Panc1 (cell line): ENCODE measurements at regions of chr17 and their contacts with region 1.

Region 1: DNA sequence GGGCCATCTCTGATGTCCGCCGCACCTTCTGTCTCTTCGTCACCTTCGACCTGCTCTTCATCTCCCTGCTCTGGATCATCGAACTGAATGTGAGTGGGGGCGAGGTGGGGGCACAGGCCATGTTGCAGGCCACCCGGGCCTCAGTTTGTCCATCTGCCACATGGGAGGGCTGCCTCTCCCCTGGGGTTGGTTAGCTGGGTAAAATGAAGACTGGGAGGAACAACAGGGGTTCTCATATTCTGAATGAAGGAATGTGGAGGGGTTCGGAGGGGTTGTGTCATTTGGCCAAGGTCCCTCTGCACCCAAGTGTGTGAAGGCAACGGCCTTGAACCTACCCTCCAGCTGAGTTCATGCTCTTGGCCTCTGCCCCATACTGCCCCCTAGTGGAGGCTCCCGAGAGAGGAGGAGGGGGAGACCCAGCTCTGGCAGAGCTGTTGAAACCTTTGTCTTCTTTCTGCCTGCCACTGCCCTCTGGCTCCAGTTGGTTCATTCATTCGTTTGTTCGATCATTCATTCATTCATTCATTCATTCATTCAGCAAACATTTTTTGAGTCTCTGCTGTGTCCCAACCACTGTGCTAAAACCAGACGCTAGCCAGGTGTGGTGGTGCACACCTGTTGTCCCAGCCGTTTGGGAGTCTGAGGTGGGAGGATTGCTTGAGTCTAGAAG is 11.4 kb upstream of the TCAP start:
- DNase-seq: no peak
- ATAC-seq: peak; percentile 74
- H3K4me3 ChIP-seq: no peak overlapping the region
- H3K27ac ChIP-seq: no peak overlapping the region
- H3K4me1 ChIP-seq: peaks cover 11% of the 10 kb centered on the region; the same call in 1 of the 2 replicates
- H3K27me3 ChIP-seq: no peaks in the 10 kb centered on the region
- CTCF ChIP-seq: peak; percentile 86

Region 2: GRCh38 chr17:39485555-39485954 is 168.2 kb before region 1 on chr17:
- CTCF ChIA-PET with region 1: no interaction called
- POLR2A ChIA-PET with region 1: no interaction called
- in situ Hi-C with region 1: no loop called
- intact Hi-C with region 1: no loop called
- DNase-seq: peak; percentile 13
- ATAC-seq: 0 out of 2 replicates have a peak, but pooled peaks have one; percentile 60
- H3K4me3 ChIP-seq: no peak overlapping the region
- H3K27ac ChIP-seq: no peak overlapping the region
- H3K4me1 ChIP-seq: no peaks in the 10 kb centered on the region
- H3K27me3 ChIP-seq: no peaks in the 10 kb centered on the region
- CTCF ChIP-seq: no peak

Region 3: DNA sequence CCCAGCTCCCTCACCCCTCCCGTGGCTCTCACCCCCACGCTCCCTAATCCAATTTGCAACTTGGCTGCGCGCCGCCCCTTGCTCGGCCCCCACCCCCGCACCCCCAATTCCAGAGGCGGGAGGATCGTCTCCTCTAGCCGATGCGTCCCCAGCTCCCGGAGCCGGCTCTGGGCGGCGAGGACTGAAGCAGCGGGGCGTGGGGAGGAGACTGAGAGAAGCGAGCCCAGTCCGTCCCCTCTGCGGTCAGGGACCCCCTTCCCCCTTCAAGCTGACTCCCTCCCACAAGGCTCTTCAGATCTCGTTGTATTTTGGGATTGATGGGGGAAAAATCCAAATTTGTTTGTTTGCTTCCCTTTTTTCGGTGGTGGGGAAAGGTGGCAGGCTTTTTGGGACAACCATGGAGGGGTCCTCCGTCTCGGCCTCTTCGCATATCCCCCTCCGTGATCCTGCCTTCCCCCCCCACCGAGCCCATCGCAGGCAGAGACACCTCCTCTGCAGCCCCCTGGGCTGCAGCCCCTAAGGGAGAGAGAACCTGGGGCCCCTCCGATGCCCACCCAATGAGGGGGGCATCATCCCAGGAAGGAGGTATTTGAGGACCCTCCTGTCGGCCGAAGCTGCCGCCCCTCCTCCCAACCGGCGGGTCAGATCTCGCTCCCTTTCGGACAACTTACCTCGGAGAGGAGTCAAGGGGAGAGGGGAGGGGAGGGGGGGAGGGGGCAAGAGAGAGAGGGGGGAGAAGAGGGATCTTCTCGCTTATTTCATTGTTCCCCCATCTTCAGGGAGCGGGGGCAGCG is 46.5 kb before region 1 on chr17:
- CTCF ChIA-PET with region 1: no interaction called
- POLR2A ChIA-PET with region 1: interaction called, 18 read pairs
- in situ Hi-C with region 1: no loop called
- intact Hi-C with region 1: no loop called
- DNase-seq: no peak
- ATAC-seq: no peak
- H3K4me3 ChIP-seq: no peak overlapping the region; a peak in 1 of 4 replicates
- H3K27ac ChIP-seq: no peak overlapping the region
- H3K4me1 ChIP-seq: no peaks in the 10 kb centered on the region
- H3K27me3 ChIP-seq: peaks cover 12% of the 10 kb centered on the region
- CTCF ChIP-seq: no peak

Region 4: DNA sequence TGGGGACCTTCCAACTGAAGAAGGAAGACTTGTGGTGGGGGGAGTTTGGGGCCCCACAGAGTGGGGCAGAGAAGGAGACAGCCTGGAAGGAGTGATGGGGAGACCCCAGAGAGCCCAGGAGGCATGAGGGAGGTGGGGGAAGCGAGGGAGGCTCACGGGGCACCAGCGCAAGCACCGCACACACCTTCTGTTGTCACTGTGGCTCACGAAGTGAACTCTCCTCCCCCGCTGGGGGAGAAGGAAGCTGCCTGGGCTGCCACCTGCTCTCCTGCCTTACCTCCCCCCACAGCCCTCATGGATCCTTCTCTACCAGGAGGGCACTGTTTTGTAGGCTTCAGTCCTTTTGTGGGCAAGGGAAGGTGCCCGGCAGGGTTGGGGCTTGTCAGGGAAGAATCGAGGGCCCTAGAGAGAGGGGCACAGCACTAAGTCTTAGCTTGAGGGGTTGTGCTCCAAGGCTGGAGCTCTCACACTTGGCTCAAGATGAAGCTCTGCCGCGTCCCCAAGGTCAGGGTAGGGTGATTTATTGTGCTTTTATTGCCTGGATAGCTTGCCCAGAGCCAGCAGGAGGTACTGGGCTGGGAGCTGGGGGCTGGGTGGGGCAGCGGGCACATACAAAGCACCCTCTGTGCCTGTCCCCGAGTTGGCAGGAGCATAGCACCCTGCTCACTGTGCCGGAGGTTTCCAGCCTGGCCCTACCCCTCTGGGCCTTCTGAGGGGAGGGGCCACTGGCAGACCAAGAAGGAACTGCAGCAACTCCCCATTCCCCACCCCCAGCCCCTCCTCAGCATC is 21.4 kb before region 1 on chr17:
- CTCF ChIA-PET with region 1: interaction called, 12 read pairs
- POLR2A ChIA-PET with region 1: no interaction called
- in situ Hi-C with region 1: no loop called
- intact Hi-C with region 1: no loop called
- DNase-seq: no peak
- ATAC-seq: peak; percentile 39; the same call in 1 of the 2 replicates
- H3K4me3 ChIP-seq: no peak overlapping the region
- H3K27ac ChIP-seq: peak overlapping the region; percentile 32
- H3K4me1 ChIP-seq: peaks cover 41% of the 10 kb centered on the region
- H3K27me3 ChIP-seq: no peaks in the 10 kb centered on the region
- CTCF ChIP-seq: no peak

Region 5: GRCh38 chr17:39863918-39864746 is 210.3 kb after region 1 on chr17 and contains the start of gene IKZF3:
- CTCF ChIA-PET with region 1: no interaction called
- POLR2A ChIA-PET with region 1: no interaction called
- in situ Hi-C with region 1: no loop called
- intact Hi-C with region 1: no loop called
- DNase-seq: no peak
- ATAC-seq: peak; percentile 99
- H3K4me3 ChIP-seq: peak within 1 kb of the TSS; percentile 26 to 29
- H3K27ac ChIP-seq: no peak within 1 kb of the TSS
- H3K4me1 ChIP-seq: peaks cover 6% of the 10 kb centered on the region
- H3K27me3 ChIP-seq: peaks cover 40% of the 10 kb centered on the region
- CTCF ChIP-seq: peak; percentile 70
- total RNA-seq, gene IKZF3: 0.59 TPM

Region 6: DNA sequence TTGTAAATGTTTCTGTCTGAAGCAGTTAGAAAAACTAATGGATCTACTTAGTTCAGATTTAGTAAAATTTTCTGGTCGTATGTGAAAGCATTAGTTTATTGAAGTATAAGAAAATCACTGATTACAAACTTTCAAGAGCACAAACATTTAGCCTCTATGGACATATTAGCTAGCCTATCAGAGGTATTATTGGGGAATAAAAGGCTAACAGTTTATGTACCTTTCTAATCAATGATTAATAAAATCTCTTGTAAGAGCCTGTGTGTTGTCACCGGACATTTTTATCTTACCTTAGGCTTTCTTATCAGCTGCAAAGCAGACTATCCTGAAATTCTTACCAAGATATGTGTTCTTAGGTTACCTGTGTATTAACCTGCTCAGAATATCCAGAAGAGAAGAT is 235.4 kb after region 1 on chr17:
- CTCF ChIA-PET with region 1: no interaction called
- POLR2A ChIA-PET with region 1: no interaction called
- in situ Hi-C with region 1: no loop called
- intact Hi-C with region 1: no loop called
- DNase-seq: no peak
- ATAC-seq: no peak
- H3K4me3 ChIP-seq: no peak overlapping the region
- H3K27ac ChIP-seq: no peak overlapping the region
- H3K4me1 ChIP-seq: no peaks in the 10 kb centered on the region
- H3K27me3 ChIP-seq: peaks cover 13% of the 10 kb centered on the region
- CTCF ChIP-seq: no peak